ENCODE measurements at regions of chr15 and their contacts with region 1.

Region 1: DNA sequence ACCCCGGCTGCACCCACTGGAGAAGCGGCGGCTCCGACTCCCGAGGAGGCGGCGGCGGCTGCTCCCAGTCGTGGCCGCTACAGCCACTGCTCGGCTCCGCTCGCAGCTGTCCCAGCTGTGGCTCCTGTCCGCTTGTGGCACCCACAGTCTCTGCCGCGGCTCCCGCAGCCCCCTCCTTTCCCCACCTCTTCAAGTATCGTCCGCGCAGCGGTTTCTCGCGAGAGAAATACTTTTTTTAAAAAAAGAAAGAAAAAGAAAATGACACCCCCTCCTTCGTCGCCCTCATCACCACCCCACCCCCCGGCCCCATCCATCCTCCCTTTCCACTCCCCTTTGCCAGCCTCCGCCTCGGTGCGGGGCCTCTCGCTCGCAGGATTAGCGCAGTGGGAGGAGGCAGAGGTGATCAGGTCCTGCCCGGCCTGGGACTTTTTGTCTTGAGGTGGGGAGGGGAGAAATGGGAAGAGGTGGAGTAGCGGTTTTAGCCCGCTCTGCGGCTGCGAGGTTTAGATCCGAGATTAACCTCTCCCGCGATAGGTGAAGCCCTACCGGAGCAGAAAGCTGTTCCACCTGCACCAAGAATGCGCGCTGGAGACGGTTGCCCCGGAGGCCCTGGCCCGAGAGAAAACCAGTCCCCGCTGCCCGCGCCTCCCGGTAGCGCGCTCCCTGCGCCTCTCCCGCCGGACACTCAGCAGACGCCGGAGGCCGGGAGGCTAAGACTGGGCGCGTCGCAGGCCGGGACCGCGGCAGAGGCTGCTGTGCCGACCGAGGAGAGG is at the start of gene FBN1:
- DNase-seq: peak; percentile 28
- ATAC-seq: peak; percentile 54
- H3K4me3 ChIP-seq: peak within 1 kb of the TSS; percentile 69
- H3K27ac ChIP-seq: no peak within 1 kb of the TSS
- H3K4me1 ChIP-seq: peaks cover 17% of the 10 kb centered on the region
- H3K27me3 ChIP-seq: no peaks in the 10 kb centered on the region
- CTCF ChIP-seq: no peak
- total RNA-seq, gene FBN1: 6.7 and 7.4 TPM in 2 replicates

Region 2: GRCh38 chr15:48358229-48358641 is 287.5 kb before region 1 on chr15:
- CTCF ChIA-PET with region 1: no interaction called
- POLR2A ChIA-PET with region 1: no interaction called
- intact Hi-C with region 1: loop called (anchors 1 kb)
- DNase-seq: peak; percentile 49
- ATAC-seq: peak; percentile 73
- H3K4me3 ChIP-seq: peak overlapping the region; percentile 32; the same call in 1 of the 2 replicates
- H3K27ac ChIP-seq: peak overlapping the region; percentile 68
- H3K4me1 ChIP-seq: peaks cover 13% of the 10 kb centered on the region
- H3K27me3 ChIP-seq: no peaks in the 10 kb centered on the region
- CTCF ChIP-seq: peak; percentile 78

Region 3: GRCh38 chr15:48459571-48460470 is 185.9 kb before region 1 on chr15:
- CTCF ChIA-PET with region 1: no interaction called
- POLR2A ChIA-PET with region 1: no interaction called
- intact Hi-C with region 1: loop called (anchors 10 kb)
- DNase-seq: peak; percentile 88
- ATAC-seq: peak; percentile 64
- H3K4me3 ChIP-seq: no peak overlapping the region; the same call in 1 of the 2 replicates
- H3K27ac ChIP-seq: peak overlapping the region; percentile 99
- H3K4me1 ChIP-seq: peaks cover 51% of the 10 kb centered on the region
- H3K27me3 ChIP-seq: no peaks in the 10 kb centered on the region
- CTCF ChIP-seq: no peak

Region 4: DNA sequence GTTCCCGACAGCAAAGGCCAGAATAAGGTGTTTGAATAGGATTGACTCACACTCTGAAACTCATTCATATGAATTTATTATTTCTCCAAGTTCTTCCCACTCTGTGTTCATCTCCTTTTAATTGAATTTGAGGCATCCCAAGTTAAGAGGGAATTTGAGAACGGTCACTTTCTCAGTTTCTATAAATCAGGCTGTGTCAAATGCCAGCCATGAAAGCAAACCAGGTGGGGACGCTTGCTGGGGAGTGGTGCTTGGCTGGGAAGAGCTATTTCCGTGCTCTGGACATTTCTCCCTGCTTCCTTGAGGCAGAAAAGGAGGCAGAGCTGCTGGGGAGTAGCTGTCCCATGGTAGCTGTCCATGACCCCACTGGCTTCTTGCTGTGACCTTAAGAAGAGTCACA is 116.8 kb before region 1 on chr15:
- CTCF ChIA-PET with region 1: no interaction called
- POLR2A ChIA-PET with region 1: no interaction called
- intact Hi-C with region 1: loop called (anchors 5 kb)
- DNase-seq: no peak
- ATAC-seq: no peak
- H3K4me3 ChIP-seq: no peak overlapping the region
- H3K27ac ChIP-seq: no peak overlapping the region
- H3K4me1 ChIP-seq: no peaks in the 10 kb centered on the region
- H3K27me3 ChIP-seq: no peaks in the 10 kb centered on the region
- CTCF ChIP-seq: no peak

Region 5: GRCh38 chr15:48703544-48703943 is 57.8 kb after region 1 on chr15:
- CTCF ChIA-PET with region 1: no interaction called
- POLR2A ChIA-PET with region 1: no interaction called
- intact Hi-C with region 1: loop called (anchors 10 kb)
- DNase-seq: peak; percentile 14
- ATAC-seq: no peak
- H3K4me3 ChIP-seq: no peak overlapping the region
- H3K27ac ChIP-seq: no peak overlapping the region
- H3K4me1 ChIP-seq: no peaks in the 10 kb centered on the region
- H3K27me3 ChIP-seq: no peaks in the 10 kb centered on the region
- CTCF ChIP-seq: no peak

Region 6: GRCh38 chr15:48800811-48801455 is 155.2 kb after region 1 on chr15:
- CTCF ChIA-PET with region 1: no interaction called
- POLR2A ChIA-PET with region 1: no interaction called
- intact Hi-C with region 1: loop called (anchors 2 kb)
- DNase-seq: peak; percentile 64
- ATAC-seq: peak; percentile 9; the same call in 1 of the 2 replicates
- H3K4me3 ChIP-seq: no peak overlapping the region
- H3K27ac ChIP-seq: 0 out of 2 replicates have a peak overlapping the region, but pooled peaks have one; percentile 5
- H3K4me1 ChIP-seq: peaks cover 36% of the 10 kb centered on the region
- H3K27me3 ChIP-seq: no peaks in the 10 kb centered on the region
- CTCF ChIP-seq: peak; percentile 67